WTC11 (cell line): ENCODE measurements at regions of chr1 and their contacts with region 1.

Region 1: DNA sequence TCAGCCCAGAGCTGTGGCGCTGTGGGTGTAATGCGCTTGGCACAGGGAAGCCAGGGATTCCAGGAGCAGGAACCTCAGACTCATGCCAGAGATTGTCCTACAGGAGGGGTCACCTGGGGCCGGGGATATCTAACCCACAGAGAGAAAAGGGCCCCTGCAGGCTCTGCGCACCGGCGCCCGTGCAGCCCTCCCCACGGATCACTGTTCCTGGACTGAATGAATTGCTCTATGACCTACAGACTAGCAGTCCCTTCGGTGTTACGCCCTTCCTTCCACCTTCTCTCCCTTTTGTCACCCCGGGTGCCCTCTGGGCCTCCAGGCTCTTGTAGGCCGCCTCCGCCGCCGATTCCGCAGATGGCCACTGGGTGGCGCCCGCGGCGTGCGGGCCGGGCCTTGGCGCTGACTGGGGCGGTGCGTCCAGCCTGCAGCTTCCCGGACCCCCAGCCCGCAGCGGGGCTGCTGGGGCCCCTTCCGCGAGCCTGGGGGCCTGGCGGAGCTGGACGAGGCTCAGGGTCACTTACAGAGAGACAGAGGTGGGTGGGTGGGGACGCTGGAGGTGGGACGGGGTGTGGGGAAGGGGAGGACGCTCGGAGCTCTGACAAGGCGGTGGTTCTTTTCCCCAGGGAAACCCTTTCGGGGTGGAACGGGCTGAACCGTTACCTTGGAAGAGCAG is 101.3 kb downstream of the IER5 start:
- DNase-seq: peak; percentile 87
- ATAC-seq: peak; percentile 91
- H3K4me3 Mint-ChIP-seq: peak overlapping the region; percentile 58
- H3K27ac Mint-ChIP-seq: no peak overlapping the region
- H3K4me1 Mint-ChIP-seq: peaks cover 5% of the 10 kb centered on the region; the same call in 1 of the 2 replicates
- H3K27me3 Mint-ChIP-seq: peaks cover 24% of the 10 kb centered on the region
- CTCF ChIP-seq: peak; percentile 97

Region 2: DNA sequence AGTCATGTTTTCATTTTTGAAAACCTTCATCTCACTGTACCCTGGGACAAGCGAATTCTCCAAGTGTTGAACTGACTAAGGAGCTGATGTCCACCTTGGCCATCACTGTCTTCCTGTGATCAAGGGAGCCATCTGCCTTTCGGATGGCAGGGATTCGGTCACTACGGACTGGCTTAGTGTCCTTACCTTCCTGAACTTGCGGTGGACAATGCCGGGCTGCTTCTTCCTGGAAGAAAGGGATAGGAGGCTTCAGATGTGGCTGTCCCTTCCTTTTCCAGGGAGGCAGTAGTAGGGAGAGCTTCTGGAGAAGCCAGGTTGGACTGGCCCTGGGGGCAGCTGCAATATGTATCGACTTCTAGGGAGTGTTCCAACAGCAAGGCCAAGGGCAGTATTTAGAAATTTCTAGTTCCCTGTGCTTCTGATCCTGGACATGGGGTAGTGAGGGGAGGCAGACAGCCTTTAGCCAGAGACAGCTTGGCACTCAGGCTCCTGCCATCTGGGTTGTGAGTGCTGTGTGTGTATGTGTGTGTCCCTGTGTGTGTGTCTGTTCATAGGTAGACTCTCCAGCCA is 13.2 kb after region 1 on chr1:
- CTCF ChIA-PET with region 1: interaction called, 10 read pairs
- POLR2A ChIA-PET with region 1: no interaction called
- DNase-seq: no peak
- ATAC-seq: no peak
- H3K4me3 Mint-ChIP-seq: no peak overlapping the region
- H3K27ac Mint-ChIP-seq: no peak overlapping the region
- H3K4me1 Mint-ChIP-seq: peaks cover 19% of the 10 kb centered on the region
- H3K27me3 Mint-ChIP-seq: peaks cover 3% of the 10 kb centered on the region; the same call in 1 of the 2 replicates
- CTCF ChIP-seq: no peak

Region 3: DNA sequence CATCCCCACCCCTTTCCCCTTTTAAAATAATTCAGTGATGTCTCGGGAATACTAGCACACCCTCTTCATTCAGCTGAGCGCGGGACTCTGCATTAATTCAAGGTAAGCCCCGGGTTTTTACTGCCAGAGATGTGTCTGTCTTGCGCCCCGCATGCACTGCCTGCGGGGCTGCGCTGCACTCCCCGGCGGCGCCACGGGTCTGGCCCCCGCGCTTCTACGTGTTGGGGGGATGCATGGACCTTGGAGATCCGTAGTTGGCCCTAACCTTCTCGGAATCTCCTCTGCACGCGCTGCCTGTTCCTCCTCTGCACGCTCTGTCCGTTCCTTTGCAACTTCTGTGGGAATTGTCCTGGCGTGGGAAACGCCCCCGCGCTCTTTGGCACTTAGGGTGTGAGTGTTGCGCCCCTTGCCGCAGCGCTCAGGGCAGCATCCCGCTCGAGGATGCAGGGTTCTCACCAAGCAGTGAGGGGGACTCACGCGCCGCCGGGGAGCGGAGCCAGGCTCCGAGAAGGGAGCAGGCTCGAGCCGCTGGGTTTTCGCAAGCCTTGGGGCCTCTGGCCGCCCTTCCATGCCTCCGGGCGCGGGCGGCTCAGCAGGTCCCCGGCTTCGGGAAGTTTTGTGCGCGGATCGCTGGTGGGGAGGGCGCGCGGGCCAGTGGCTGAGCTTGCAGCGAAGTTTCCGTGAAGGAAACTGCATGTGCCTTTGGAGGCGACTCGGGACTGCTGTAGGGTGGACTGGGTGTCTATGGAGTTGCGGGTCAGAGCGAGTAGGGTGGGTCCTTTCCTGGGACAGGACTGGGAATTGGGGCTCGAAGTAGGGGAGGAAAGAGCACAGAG is 128.4 kb after region 1 on chr1:
- CTCF ChIA-PET with region 1: interaction called, 27 read pairs
- POLR2A ChIA-PET with region 1: no interaction called
- DNase-seq: peak; percentile 62
- ATAC-seq: peak; percentile 80
- H3K4me3 Mint-ChIP-seq: peak overlapping the region; percentile 86
- H3K27ac Mint-ChIP-seq: no peak overlapping the region
- H3K4me1 Mint-ChIP-seq: peaks cover 16% of the 10 kb centered on the region
- H3K27me3 Mint-ChIP-seq: peaks cover 76% of the 10 kb centered on the region
- CTCF ChIP-seq: no peak

Region 4: DNA sequence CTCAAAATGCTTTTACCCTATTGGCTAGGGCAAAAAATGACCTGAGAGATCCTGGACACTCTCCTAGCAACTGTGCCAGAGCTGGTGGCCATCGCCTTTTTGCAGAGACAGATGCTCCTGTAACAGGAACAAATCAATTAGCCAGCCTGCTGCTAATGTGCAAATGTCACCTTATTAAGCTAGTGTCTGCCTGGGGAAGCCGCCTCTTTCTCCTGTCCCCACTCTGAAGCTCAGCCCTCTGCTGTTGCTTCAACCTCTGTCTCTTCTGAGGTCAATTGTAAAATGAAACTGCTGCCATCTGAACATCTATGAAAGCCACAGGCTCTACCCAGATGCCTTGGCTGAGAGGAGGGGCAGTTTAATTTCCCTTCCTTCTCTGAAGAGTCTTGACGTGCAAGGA is 208.0 kb after region 1 on chr1:
- CTCF ChIA-PET with region 1: interaction called, 16 read pairs
- POLR2A ChIA-PET with region 1: no interaction called
- DNase-seq: no peak
- ATAC-seq: no peak
- H3K4me3 Mint-ChIP-seq: no peak overlapping the region
- H3K27ac Mint-ChIP-seq: no peak overlapping the region
- H3K4me1 Mint-ChIP-seq: no peaks in the 10 kb centered on the region
- H3K27me3 Mint-ChIP-seq: no peaks in the 10 kb centered on the region
- CTCF ChIP-seq: no peak

Region 5: DNA sequence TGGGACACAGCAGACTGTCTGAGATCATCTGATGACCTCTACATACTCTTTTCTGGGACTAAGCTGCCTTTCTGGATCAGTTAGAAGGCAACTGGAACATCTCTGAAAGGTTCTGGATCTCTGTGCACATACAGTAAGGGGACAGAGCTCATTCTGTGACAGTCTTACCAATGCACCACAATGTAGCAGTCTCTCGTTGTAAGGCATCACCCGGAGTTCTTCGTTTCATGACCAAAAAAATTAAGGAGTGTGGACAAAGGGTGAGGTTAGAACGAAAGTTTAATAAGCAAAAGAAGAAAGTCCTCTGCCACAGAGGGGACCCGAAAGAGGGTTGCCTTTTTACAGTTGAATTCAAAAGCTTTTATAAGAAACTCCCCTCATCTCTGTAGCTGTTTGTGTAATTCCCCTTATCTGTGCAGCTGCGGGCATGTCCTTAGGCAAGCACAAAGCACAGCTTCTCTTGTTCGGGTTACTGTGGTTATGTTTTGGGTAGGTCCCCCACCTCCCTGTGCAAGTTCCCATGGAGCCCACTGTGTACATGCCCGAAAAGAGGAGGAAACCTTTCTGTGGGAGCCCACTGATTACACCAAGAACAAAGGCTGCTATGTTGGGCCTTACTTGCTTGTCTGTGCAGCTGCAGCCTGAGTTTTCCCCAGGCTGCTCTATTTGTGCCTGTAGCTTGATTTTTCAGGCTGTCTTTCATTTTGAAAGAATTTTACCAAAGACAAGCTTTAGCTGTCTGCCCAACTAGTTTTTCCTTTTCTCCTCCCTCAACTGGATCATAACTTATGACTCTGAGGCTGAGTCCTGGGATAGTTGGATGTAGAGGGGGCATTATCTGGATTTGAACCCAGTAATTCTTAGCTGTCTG is 240.4 kb after region 1 on chr1:
- CTCF ChIA-PET with region 1: interaction called, 104 read pairs
- POLR2A ChIA-PET with region 1: interaction called, 3 read pairs
- DNase-seq: no peak
- ATAC-seq: no peak
- H3K4me3 Mint-ChIP-seq: no peak overlapping the region
- H3K27ac Mint-ChIP-seq: no peak overlapping the region
- H3K4me1 Mint-ChIP-seq: peaks cover 8% of the 10 kb centered on the region
- H3K27me3 Mint-ChIP-seq: peaks cover 13% of the 10 kb centered on the region
- CTCF ChIP-seq: no peak